IMR-90 (cell line): ENCODE measurements at regions of chr14 and their contacts with region 1.

Region 1: DNA sequence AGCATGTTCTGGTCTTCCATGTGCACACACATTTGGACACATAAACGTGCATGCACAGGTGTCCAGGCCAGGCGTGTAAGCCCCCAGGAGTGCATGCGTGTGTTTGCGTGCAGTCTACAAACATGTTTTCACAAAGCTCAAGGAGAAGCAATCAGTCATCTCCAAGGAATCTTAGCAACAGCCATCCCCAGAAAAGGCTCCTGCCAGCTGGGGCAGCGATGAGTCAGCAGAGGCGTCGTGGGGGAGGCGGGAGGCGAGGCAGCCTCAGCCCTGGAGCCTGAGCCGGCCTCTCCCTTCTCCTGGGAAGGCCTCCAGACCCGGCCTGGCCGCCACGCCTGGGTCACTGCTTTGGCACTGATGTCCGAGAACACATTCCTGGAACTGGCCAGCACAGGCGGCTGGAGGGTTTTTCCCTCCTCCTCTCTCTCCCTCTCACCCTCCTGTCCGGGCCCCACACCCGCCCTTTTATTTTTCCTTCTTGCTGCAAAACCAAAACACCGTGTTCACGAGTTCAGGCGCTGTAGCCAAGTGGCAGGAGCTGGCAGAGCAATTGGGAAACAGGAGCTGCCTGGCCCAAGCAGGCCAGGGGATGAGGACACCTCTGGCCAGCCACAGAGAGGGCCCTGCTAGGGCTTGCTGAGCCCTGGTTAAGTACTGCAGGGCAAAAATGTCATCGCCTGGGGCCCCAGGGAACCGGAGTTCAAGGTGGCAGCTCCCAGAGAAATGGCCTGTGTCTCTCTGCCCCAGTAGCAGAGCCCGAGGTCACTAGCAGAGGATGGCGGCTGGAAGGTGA is 92.7 kb downstream of the LRRC74A start:
- DNase-seq: peak; percentile 99
- ATAC-seq: peak; percentile 82
- H3K4me3 ChIP-seq: no peak overlapping the region
- H3K27ac ChIP-seq: peak overlapping the region; percentile 97
- H3K4me1 ChIP-seq: peaks cover 48% of the 10 kb centered on the region
- H3K27me3 ChIP-seq: no peaks in the 10 kb centered on the region
- CTCF ChIP-seq: 0 out of 2 replicates have a peak, but pooled peaks have one; percentile 13
- POLR2A ChIP-seq: peak; percentile 63
- RAD21 ChIP-seq: peak; percentile 31

Region 2: GRCh38 chr14:75577729-75578101 is 1341.2 kb before region 1 on chr14:
- CTCF ChIA-PET with region 1: no interaction called
- POLR2A ChIA-PET with region 1: no interaction called
- dilution Hi-C with region 1: no loop called
- in situ Hi-C with region 1: no loop called
- intact Hi-C with region 1: no loop called
- DNase-seq: peak; percentile 77
- ATAC-seq: peak; percentile 88
- H3K4me3 ChIP-seq: peak overlapping the region; percentile 45
- H3K27ac ChIP-seq: 0 out of 2 replicates have a peak overlapping the region, but pooled peaks have one; percentile 4
- H3K4me1 ChIP-seq: peaks cover 8% of the 10 kb centered on the region; the same call in 1 of the 2 replicates
- H3K27me3 ChIP-seq: peaks cover 14% of the 10 kb centered on the region
- CTCF ChIP-seq: peak; percentile 77
- POLR2A ChIP-seq: no peak
- RAD21 ChIP-seq: peak; percentile 87

Region 3: GRCh38 chr14:75995372-75996041 is 923.4 kb before region 1 on chr14:
- CTCF ChIA-PET with region 1: no interaction called
- POLR2A ChIA-PET with region 1: no interaction called
- dilution Hi-C with region 1: no loop called
- in situ Hi-C with region 1: no loop called
- intact Hi-C with region 1: no loop called
- DNase-seq: peak; percentile 95
- ATAC-seq: peak; percentile 87
- H3K4me3 ChIP-seq: peak overlapping the region; percentile 3; the same call in 1 of the 2 replicates
- H3K27ac ChIP-seq: peak overlapping the region; percentile 93
- H3K4me1 ChIP-seq: peaks cover 11% of the 10 kb centered on the region
- H3K27me3 ChIP-seq: no peaks in the 10 kb centered on the region
- CTCF ChIP-seq: no peak
- POLR2A ChIP-seq: no peak
- RAD21 ChIP-seq: no peak

Region 4: GRCh38 chr14:76956316-76957090 is 37.6 kb after region 1 on chr14:
- CTCF ChIA-PET with region 1: interaction called, 5 read pairs
- POLR2A ChIA-PET with region 1: interaction called, 14 read pairs
- dilution Hi-C with region 1: no loop called
- in situ Hi-C with region 1: no loop called
- intact Hi-C with region 1: loop called (anchors 2 kb)
- DNase-seq: peak; percentile 89
- ATAC-seq: peak; percentile 74
- H3K4me3 ChIP-seq: peak overlapping the region; percentile 5; the same call in 1 of the 2 replicates
- H3K27ac ChIP-seq: peak overlapping the region; percentile 91
- H3K4me1 ChIP-seq: peaks cover 41% of the 10 kb centered on the region
- H3K27me3 ChIP-seq: no peaks in the 10 kb centered on the region
- CTCF ChIP-seq: no peak
- POLR2A ChIP-seq: no peak
- RAD21 ChIP-seq: peak; percentile 38

Region 5: GRCh38 chr14:77028384-77029231 is 109.7 kb after region 1 on chr14 and contains the start of gene IRF2BPL:
- CTCF ChIA-PET with region 1: interaction called, 7 read pairs
- POLR2A ChIA-PET with region 1: interaction called, 8 read pairs
- dilution Hi-C with region 1: no loop called
- in situ Hi-C with region 1: loop called (anchors 5 kb)
- intact Hi-C with region 1: loop called (anchors 1 kb)
- DNase-seq: peak; percentile 99
- ATAC-seq: peak; percentile 63
- H3K4me3 ChIP-seq: peak within 1 kb of the TSS; percentile 97
- H3K27ac ChIP-seq: peak within 1 kb of the TSS; percentile 99
- H3K4me1 ChIP-seq: peaks cover 13% of the 10 kb centered on the region
- H3K27me3 ChIP-seq: no peaks in the 10 kb centered on the region
- CTCF ChIP-seq: no peak
- POLR2A ChIP-seq: peak; percentile 80
- RAD21 ChIP-seq: peak; percentile 15; the same call in 1 of the 2 replicates
- total RNA-seq, gene IRF2BPL: 6.3 and 8.9 TPM in 2 replicates

Region 6: GRCh38 chr14:77053046-77053841 is 134.3 kb after region 1 on chr14:
- CTCF ChIA-PET with region 1: interaction called, 15 read pairs
- POLR2A ChIA-PET with region 1: no interaction called
- dilution Hi-C with region 1: no loop called
- in situ Hi-C with region 1: no loop called
- intact Hi-C with region 1: loop called (anchors 1 kb)
- DNase-seq: peak; percentile 76
- ATAC-seq: peak; percentile 87
- H3K4me3 ChIP-seq: no peak overlapping the region
- H3K27ac ChIP-seq: no peak overlapping the region
- H3K4me1 ChIP-seq: peaks cover 10% of the 10 kb centered on the region
- H3K27me3 ChIP-seq: no peaks in the 10 kb centered on the region
- CTCF ChIP-seq: peak; percentile 94
- POLR2A ChIP-seq: peak; percentile 55; the same call in 1 of the 2 replicates
- RAD21 ChIP-seq: peak; percentile 98

Region 7: GRCh38 chr14:77067632-77068514 is 148.9 kb after region 1 on chr14:
- CTCF ChIA-PET with region 1: interaction called, 22 read pairs
- POLR2A ChIA-PET with region 1: no interaction called
- dilution Hi-C with region 1: no loop called
- in situ Hi-C with region 1: loop called (anchors 5 kb)
- intact Hi-C with region 1: loop called (anchors 1 kb)
- DNase-seq: peak; percentile 57
- ATAC-seq: peak; percentile 85
- H3K4me3 ChIP-seq: no peak overlapping the region
- H3K27ac ChIP-seq: no peak overlapping the region
- H3K4me1 ChIP-seq: peaks cover 3% of the 10 kb centered on the region
- H3K27me3 ChIP-seq: no peaks in the 10 kb centered on the region
- CTCF ChIP-seq: peak; percentile 91
- POLR2A ChIP-seq: no peak
- RAD21 ChIP-seq: peak; percentile 98

Region 8: DNA sequence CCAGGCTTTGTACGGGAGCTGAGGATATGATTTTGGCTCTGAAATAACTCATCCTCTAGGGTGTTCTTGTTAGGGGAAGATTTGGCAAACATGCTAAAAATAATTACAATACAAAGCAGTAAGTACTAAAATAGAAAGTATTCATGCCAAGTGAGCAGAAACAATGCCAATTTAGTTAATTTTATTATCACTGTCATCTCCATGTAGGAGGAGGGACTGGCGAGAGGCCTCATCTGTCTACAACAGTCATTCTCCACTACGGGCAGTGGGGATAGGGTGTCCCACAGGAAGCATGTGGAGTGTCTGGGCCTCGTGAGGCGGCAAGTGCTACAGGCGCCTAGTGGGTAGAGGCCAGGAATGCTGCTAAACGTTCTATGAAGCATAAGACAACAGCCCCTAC is 576.4 kb after region 1 on chr14:
- CTCF ChIA-PET with region 1: no interaction called
- POLR2A ChIA-PET with region 1: no interaction called
- dilution Hi-C with region 1: no loop called
- in situ Hi-C with region 1: no loop called
- intact Hi-C with region 1: no loop called
- DNase-seq: no peak
- ATAC-seq: no peak
- H3K4me3 ChIP-seq: no peak overlapping the region
- H3K27ac ChIP-seq: no peak overlapping the region
- H3K4me1 ChIP-seq: no peaks in the 10 kb centered on the region
- H3K27me3 ChIP-seq: peaks cover 30% of the 10 kb centered on the region
- CTCF ChIP-seq: no peak
- POLR2A ChIP-seq: no peak
- RAD21 ChIP-seq: no peak